Head of caudate nucleus (tissue), 42 donors: ENCODE measurements at regions of chr6 and their contacts with region 1.

Region 1: GRCh38 chr6:49531774-49532569 is 18.5 kb upstream of the C6orf141 start:
- DNase-seq: no peak

Region 2: DNA sequence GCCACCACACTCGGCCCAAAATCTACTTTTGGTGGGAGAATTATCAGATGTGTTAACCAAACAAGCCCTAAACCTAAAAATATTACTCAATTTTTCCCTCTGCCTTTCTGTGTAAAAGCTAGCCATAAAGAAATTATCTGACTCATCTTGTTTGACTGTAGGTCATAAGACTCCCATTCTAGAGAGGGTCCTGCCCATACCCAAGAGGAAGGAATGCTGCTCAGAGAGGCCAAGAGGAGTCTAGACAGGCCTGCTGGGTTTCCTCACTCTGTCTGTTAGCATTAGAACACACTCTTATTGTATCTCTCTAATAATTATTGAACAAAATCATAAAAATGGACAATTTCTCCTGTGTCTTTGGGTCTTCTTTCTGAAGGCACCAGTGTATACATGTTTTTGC is 44.6 kb after region 1 on chr6:
- intact Hi-C with region 1: no loop called
- DNase-seq: no peak

Region 3: DNA sequence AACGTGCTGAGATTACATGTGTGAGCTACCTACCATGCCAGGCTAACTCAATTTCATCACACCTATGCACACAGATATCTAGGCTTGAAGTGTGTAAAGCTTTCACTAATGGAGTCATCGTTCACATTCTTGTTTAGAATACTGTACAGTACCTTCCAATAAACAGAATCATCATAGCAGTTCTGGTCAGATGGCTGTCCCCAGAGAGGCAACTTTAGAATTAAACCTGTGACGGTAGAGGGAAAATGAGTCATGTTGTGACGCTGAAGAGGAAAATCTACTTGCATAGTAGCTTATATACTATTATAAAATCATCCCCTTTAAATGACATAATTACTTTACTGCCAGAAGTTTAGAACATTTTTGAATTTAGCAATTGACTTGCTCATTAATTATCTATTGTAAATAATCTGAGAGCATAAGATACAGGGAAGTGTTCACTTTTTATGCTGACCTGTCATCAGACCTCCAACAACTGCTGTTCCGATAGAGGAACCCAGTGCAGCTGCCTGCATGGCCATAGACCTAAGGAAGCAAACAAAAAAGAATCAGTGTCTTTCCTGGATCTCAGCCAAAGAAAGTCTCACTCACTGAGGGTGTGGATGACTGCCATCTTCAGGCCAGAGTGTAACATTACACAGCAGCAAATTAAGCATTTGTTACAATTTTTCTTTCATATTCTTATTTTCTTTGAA is 74.9 kb after region 1 on chr6:
- intact Hi-C with region 1: loop called (anchors 5 kb)
- DNase-seq: peak in 36 of 42 donors; percentile 7 to 76 (median 40)

Region 4: GRCh38 chr6:49849213-49849907 is 317.4 kb after region 1 on chr6:
- intact Hi-C with region 1: loop called (anchors 10 kb)
- DNase-seq: peak in 4 of 42 donors; percentile 0 to 17 (median 6)